Lower leg skin (tissue), 4 donors: ENCODE measurements at regions of chr7 and their contacts with region 1.

Region 1: DNA sequence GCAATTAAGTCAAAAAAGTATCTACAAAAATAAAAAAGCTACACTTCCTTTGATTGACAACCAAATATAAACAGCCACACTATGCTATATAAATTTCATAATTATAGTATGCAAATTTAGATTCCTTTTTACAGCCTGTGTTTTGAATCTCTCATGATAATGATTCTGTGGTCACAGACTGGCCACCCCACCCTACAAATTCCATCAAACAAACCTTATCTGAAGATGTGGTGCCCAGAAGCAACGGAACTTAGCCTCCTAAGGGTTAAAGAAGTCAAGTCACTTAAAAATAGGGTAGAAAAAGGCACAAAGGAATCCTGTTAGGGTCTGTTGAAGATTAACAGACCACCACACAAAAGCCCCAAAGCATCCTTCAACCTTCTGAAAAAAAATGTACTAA is 351.8 kb downstream of the INHBA start:
- DNase-seq: no peak
- H3K4me3 ChIP-seq: no peak overlapping the region
- CTCF ChIP-seq: no peak
- POLR2A ChIP-seq: no peak

Region 2: GRCh38 chr7:41367967-41368882 is 17.1 kb after region 1 on chr7:
- intact Hi-C with region 1: loop called (anchors 2 kb)
- DNase-seq: no peak
- H3K4me3 ChIP-seq: no peak overlapping the region
- CTCF ChIP-seq: no peak
- POLR2A ChIP-seq: no peak